ENCODE measurements at regions of chr1 and their contacts with region 1.

Region 1: GRCh38 chr1:167599957-167600581 is 30.0 kb upstream of the RCSD1 start:
- DNase-seq: peak in 1 of 2 donors; percentile 41
- H3K4me3 ChIP-seq: no peak overlapping the region
- H3K27ac ChIP-seq: no peak overlapping the region
- H3K4me1 ChIP-seq: peaks cover 0 to 21% (median 10%) of the 10 kb centered on the region in 4 donors
- H3K27me3 ChIP-seq: no peaks in the 10 kb centered on the region
- CTCF ChIP-seq: peak; percentile 57 to 70

Region 2: GRCh38 chr1:167687919-167688519 is 88.0 kb after region 1 on chr1:
- intact Hi-C with region 1: loop called (anchors 2 kb)
- DNase-seq: peak in 1 of 2 donors; percentile 80
- H3K4me3 ChIP-seq: no peak overlapping the region
- H3K27ac ChIP-seq: no peak overlapping the region
- H3K4me1 ChIP-seq: peaks cover 0 to 35% (median 21%) of the 10 kb centered on the region in 4 donors
- H3K27me3 ChIP-seq: no peaks in the 10 kb centered on the region
- CTCF ChIP-seq: peak; percentile 87 to 91

Region 3: GRCh38 chr1:167797015-167797414 is 196.9 kb after region 1 on chr1:
- intact Hi-C with region 1: loop called (anchors 10 kb)
- DNase-seq: peak; percentile 90
- H3K4me3 ChIP-seq: no peak overlapping the region
- H3K27ac ChIP-seq: peak overlapping the region; percentile 61 to 74
- H3K4me1 ChIP-seq: peaks cover 0 to 31% (median 8%) of the 10 kb centered on the region in 4 donors
- H3K27me3 ChIP-seq: no peaks in the 10 kb centered on the region
- CTCF ChIP-seq: no peak

Measured in tibial artery (tissue), 4 donors.